ENCODE measurements at regions of chr3 and their contacts with region 1.

Region 1: DNA sequence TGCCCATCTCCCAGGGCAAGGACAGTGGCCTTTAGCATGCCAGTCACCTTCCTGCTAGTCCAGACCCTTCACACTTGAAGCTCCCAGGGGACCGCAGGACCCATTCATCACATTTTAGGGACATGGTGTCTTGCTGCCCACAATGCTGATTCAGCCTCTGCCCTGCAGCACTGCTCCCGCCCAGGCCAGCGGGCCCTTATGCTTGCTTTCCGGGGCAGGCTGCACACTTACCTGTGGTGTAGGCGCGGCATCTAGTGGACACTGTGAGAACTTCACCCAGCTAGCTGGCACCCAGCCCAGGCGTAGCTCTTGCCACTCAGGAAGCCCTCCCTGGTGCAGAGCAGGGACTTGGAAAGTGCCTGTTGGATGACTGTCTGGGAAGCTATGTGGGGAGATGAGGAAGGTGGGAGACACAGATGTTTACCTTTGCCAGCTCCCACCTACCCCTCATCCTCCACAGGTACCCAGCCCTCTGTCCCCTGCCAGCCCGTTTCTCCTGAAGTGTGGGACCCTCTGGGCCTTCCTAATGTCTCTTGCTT is 26.2 kb upstream of the NR2C2 start:
- ATAC-seq: peak; percentile 71 to 95 (median 93)
- H3K4me3 ChIP-seq: no peak overlapping the region
- H3K27ac ChIP-seq: no peak overlapping the region
- H3K4me1 ChIP-seq: no peaks in the 10 kb centered on the region

Region 2: GRCh38 chr3:14480207-14481025 is 440.7 kb before region 1 on chr3:
- in situ Hi-C with region 1: loop called in 1 of 9 experiments (anchors 25 kb)
- ATAC-seq: peak in 6 of 8 experiments; percentile 16 to 86 (median 74)
- H3K4me3 ChIP-seq: no peak overlapping the region
- H3K27ac ChIP-seq: peak overlapping the region in 1 of 2 donors; percentile 41
- H3K4me1 ChIP-seq: no peaks in the 10 kb centered on the region

Region 3: DNA sequence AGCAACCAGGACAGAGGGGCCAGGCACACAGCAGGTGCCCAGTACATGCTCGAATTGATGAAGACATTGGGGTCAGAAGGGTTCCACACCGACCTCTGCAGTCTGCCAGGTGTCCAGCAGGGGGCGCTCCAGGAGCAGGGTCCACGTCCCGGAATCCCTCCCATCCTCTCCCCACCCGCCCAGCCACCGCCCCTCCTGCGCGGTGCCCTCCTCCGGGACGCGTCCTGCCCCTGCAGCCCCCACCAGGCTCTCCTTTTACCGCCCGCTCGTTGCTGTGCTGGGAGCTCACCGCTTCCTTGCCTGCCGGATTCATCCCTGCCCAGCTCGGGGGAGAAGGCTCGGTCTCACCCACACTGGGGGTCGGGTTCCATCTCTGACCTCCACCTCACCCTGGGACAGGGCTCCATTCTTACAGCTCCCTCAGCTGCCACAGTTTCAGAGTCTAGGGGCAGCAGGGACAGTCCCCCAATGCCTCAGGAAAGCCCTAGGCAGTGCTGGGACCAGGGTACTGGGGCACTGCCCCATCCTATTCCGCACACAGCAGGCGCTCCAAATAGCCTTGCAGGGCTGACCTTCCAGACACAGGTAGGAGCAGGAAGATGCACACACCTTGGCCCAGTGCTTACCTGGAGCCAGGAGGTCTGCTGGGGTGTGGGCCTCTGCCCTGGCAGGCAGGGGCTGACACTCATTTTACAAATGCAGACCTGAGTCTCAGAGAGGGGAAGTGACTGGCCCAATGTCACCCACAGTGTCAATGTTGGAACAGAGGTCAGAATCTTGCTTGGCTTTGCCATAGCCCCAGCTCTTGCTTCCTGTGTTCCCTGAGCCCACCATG is 412.0 kb before region 1 on chr3:
- in situ Hi-C with region 1: loop called in 3 of 9 experiments (anchors 25 kb)
- ATAC-seq: peak; percentile 75 to 91 (median 86)
- H3K4me3 ChIP-seq: peak overlapping the region in 4 of 5 donors; percentile 12 to 25 (median 23)
- H3K27ac ChIP-seq: no peak overlapping the region
- H3K4me1 ChIP-seq: peaks cover 2 to 7% of the 10 kb centered on the region in 2 donors

Region 4: GRCh38 chr3:14651440-14652251 is 269.5 kb before region 1 on chr3 and contains the start of gene CCDC174:
- in situ Hi-C with region 1: loop called in 3 of 9 experiments (anchors 25 kb)
- ATAC-seq: peak; percentile 93 to 98 (median 94)
- H3K4me3 ChIP-seq: peak within 1 kb of the TSS; percentile 55 to 80 (median 62)
- H3K27ac ChIP-seq: peak within 1 kb of the TSS; percentile 87 to 94
- H3K4me1 ChIP-seq: peaks cover 31 to 36% of the 10 kb centered on the region in 2 donors
- total RNA-seq, gene CCDC174: 16.4 to 38.6 (median 23.2) TPM

Region 5: GRCh38 chr3:14660907-14661306 is 260.2 kb before region 1 on chr3:
- in situ Hi-C with region 1: loop called in 4 of 9 experiments (anchors 10 to 25 kb)
- ATAC-seq: no peak
- H3K4me3 ChIP-seq: no peak overlapping the region
- H3K27ac ChIP-seq: no peak overlapping the region
- H3K4me1 ChIP-seq: no peaks in the 10 kb centered on the region

Region 6: GRCh38 chr3:14678015-14678503 is 243.1 kb before region 1 on chr3:
- in situ Hi-C with region 1: loop called in 6 of 9 experiments (anchors 10 to 25 kb)
- ATAC-seq: peak in 2 of 8 experiments; percentile 6 to 7
- H3K4me3 ChIP-seq: no peak overlapping the region
- H3K27ac ChIP-seq: no peak overlapping the region
- H3K4me1 ChIP-seq: peaks cover 0 to 16% of the 10 kb centered on the region in 2 donors

Region 7: GRCh38 chr3:14780927-14781507 is 140.1 kb before region 1 on chr3:
- in situ Hi-C with region 1: loop called in 4 of 9 experiments (anchors 25 kb)
- ATAC-seq: peak in 5 of 8 experiments; percentile 9 to 68 (median 36)
- H3K4me3 ChIP-seq: no peak overlapping the region
- H3K27ac ChIP-seq: no peak overlapping the region
- H3K4me1 ChIP-seq: peaks cover 5 to 10% of the 10 kb centered on the region in 2 donors

Region 8: DNA sequence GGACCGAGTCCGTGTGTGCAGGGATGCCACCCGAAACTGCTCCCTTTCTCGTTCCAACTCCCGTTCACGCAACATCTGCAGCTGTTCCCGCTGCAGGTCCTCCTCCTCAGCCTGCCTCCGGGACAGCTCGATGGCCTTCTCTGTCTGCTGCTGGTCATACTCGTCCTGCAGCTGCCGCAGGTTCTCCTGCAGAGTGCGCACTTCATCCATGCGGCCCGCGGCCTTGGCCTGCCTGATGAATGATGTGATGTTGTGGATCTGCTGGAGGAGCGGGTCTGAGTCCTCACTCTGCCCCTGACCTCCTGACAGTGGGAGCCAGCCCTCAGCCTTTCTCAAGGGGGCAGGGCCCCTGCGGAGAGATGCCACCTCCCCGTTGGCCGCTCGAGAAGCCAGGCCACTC is 153.3 kb after region 1 on chr3:
- in situ Hi-C with region 1: no loop called
- ATAC-seq: peak in 4 of 8 experiments; percentile 24 to 60 (median 45)
- H3K4me3 ChIP-seq: no peak overlapping the region
- H3K27ac ChIP-seq: no peak overlapping the region
- H3K4me1 ChIP-seq: no peaks in the 10 kb centered on the region